Left cardiac atrium (tissue), 4 donors: ENCODE measurements at regions of chr7 and their contacts with region 1.

Region 1: GRCh38 chr7:37284805-37285231 is 163.8 kb downstream of the ELMO1 start:
- DNase-seq: peak; percentile 34
- ATAC-seq: peak; percentile 34 to 51

Region 2: GRCh38 chr7:37448636-37449361 is 164.0 kb after region 1 on chr7 and contains the start of gene ELMO1:
- intact Hi-C with region 1: loop called (anchors 2 to 5 kb)
- DNase-seq: peak; percentile 85
- ATAC-seq: peak; percentile 87 to 92
- total RNA-seq, gene ELMO1: 15.6 to 24.6 TPM

Region 3: DNA sequence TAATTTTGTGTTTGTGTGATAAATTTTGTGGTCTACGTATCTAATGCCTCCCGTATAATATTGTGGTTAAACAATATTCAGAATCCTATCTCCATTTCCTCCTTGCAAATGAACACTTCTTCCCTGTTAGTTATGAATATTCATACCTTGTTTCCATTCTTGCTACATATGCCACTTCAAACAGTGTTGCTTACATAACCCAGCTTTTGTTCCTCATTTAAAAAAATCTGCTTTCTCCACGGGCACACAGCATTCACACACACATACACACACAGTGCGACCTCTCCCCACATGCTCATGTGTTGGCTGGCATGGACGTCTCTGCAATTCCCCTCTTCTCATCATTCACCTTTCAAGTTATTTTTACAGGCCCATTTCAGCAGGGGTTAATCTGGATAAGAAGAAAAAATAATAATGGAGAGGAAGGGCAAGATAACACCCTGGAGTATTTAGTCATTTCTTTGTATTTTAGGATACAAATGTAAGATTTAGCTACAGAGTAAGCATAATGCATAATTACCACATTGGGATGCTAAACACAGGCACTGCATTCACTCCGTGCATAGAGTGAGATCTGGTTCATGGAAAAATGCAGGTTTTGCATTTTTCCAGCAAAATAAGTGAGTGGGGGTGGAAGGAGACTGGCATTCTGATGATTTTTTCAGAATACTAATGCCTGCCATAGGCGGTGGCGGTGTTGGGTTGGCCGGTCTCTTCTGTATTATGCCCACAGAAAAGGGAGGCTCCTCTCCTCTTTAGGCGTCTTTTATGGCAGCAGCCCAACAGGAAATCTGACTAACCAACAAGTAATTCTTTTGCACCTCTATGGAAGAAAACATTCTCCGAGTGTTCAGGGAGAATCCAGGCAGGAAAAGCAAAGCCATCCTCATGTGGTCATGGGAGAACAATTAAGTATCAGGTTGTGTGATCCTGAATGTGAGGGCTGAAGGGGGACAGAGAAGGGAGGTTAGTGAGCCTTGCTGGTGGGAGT is 195.5 kb after region 1 on chr7:
- intact Hi-C with region 1: loop called in 1 of 2 experiments (anchors 10 kb)
- DNase-seq: peak; percentile 58
- ATAC-seq: peak in 1 of 2 donors; percentile 63

Region 4: DNA sequence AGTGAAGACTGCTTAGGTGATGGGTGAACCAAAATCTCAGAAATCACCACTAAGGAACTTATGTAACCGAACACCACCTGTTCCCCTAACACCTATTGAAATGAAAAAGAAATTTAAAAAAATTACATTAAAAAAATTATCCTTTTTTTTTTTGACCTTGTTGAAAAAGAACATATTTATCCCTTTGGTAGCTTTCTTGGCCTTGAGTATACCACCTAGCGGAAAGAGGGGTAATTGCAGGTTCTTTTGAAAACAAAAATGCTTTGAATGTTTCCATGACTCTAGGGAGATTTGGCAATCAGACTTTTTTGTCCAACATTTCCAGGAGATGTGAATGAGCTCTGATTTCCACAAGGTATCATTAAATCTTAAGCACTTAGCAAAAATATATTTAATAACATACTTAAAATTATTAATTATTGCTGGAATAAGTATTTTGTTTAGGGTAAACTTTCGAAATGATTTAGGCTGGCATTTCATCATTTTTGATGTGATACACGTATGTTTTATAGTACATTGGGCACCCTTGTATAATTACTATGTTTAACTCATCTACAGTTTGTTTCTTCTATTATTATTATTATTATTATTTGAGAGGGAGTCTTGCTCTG is 210.9 kb after region 1 on chr7:
- intact Hi-C with region 1: loop called in 1 of 2 experiments (anchors 10 kb)
- DNase-seq: no peak
- ATAC-seq: no peak